Transverse colon (tissue), 4 donors: ENCODE measurements at regions of chr17 and their contacts with region 1.

Region 1: GRCh38 chr17:17484451-17484899 is 7.7 kb downstream of the MED9 start:
- DNase-seq: no peak
- H3K4me3 ChIP-seq: no peak overlapping the region
- H3K27ac ChIP-seq: no peak overlapping the region
- H3K4me1 ChIP-seq: peaks cover 0 to 26% (median 0%) of the 10 kb centered on the region in 4 donors
- H3K27me3 ChIP-seq: no peaks in the 10 kb centered on the region
- CTCF ChIP-seq: no peak
- EP300 ChIP-seq: no peak
- POLR2A ChIP-seq: no peak

Region 2: GRCh38 chr17:17344462-17345293 is 139.8 kb before region 1 on chr17:
- in situ Hi-C with region 1: no loop called
- intact Hi-C with region 1: no loop called
- DNase-seq: no peak
- H3K4me3 ChIP-seq: no peak overlapping the region
- H3K27ac ChIP-seq: no peak overlapping the region
- H3K4me1 ChIP-seq: no peaks in the 10 kb centered on the region
- H3K27me3 ChIP-seq: no peaks in the 10 kb centered on the region
- CTCF ChIP-seq: no peak
- EP300 ChIP-seq: no peak
- POLR2A ChIP-seq: no peak

Region 3: DNA sequence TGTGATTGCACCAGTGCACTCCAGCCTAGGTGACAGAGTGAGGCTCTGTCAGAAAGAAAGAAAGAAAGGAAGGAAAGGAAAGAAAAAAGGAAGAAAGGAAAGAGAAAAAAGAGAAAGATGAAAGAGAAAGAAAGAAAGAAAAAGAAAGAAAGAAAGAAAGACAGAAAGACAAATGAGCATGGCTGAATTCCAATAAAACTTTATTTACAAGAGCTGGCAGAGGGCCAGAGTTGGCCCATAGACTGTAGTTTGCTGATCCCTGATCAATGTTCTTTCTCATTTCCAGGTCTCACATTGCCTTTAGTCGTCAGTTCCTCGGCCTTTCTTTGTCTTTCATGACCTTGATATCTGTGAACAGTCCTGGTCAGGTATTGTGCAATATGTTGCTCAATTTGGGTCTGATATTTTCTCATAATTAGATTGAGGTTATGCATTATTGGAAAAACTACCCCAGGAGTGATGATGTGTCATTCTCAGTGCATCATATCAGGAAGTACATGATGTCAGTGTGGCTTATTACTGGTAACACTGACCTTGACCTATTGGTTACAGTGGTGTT is 76.2 kb before region 1 on chr17:
- in situ Hi-C with region 1: no loop called
- intact Hi-C with region 1: loop called (anchors 5 kb)
- DNase-seq: no peak
- H3K4me3 ChIP-seq: no peak overlapping the region
- H3K27ac ChIP-seq: no peak overlapping the region
- H3K4me1 ChIP-seq: peaks cover 0 to 7% (median 0%) of the 10 kb centered on the region in 4 donors
- H3K27me3 ChIP-seq: peaks cover 8% of the 10 kb centered on the region
- CTCF ChIP-seq: no peak
- EP300 ChIP-seq: no peak
- POLR2A ChIP-seq: no peak

Region 4: DNA sequence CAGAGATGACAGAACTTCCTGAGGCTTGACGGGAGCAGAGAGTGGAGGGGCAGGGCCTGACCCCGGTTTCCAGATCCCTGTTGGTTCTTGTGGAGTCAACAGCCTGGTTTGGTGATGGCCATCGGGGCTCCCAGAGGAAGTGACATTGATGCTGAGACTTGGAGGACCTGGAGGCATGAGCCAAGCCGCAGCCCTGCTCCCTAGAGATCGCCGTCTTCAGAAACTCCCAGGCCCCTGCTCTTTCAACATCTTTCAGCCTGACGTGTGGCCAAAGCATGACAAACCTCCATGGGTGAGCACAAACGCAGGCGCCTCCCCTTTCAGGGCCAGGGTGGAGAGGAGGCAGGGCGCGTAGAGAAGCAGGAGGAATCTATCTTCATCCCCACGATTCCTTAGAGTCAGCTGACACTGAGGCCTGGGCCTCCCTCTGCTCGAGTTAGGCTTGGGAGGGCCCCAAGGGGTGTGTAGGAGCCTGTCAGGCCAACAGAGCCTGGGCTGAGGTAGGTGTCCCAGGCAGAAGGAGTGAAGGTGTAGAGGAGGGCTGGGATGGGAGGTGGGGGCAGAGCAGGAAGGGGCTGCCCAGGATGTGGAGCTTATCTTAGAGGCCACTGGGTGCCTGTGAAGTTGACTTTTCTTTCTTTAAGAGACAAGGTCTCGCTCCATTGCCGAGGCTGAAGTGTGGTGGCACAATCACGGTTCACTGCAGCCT is 63.8 kb before region 1 on chr17:
- in situ Hi-C with region 1: no loop called
- intact Hi-C with region 1: no loop called
- DNase-seq: no peak
- H3K4me3 ChIP-seq: no peak overlapping the region
- H3K27ac ChIP-seq: no peak overlapping the region
- H3K4me1 ChIP-seq: peaks cover 0 to 15% (median 7%) of the 10 kb centered on the region in 4 donors
- H3K27me3 ChIP-seq: no peaks in the 10 kb centered on the region
- CTCF ChIP-seq: no peak
- EP300 ChIP-seq: no peak
- POLR2A ChIP-seq: no peak

Region 5: GRCh38 chr17:17545031-17545820 is 60.8 kb after region 1 on chr17:
- in situ Hi-C with region 1: no loop called
- intact Hi-C with region 1: no loop called
- DNase-seq: no peak
- H3K4me3 ChIP-seq: no peak overlapping the region
- H3K27ac ChIP-seq: no peak overlapping the region
- H3K4me1 ChIP-seq: peaks cover 0 to 2% (median 0%) of the 10 kb centered on the region in 4 donors
- H3K27me3 ChIP-seq: no peaks in the 10 kb centered on the region
- CTCF ChIP-seq: no peak
- EP300 ChIP-seq: no peak
- POLR2A ChIP-seq: no peak